Activated CD4-positive, alpha-beta T cell treated with anti-CD3 and anti-CD28 coated beads for 36 hours (primary cell): ENCODE measurements at regions of chr17 and their contacts with region 1.

Region 1: GRCh38 chr17:31696184-31696602 is 162.9 kb downstream of the COPRS start:
- DNase-seq: no peak
- ATAC-seq: no peak
- H3K4me3 Mint-ChIP-seq: no peak overlapping the region
- H3K27ac Mint-ChIP-seq: no peak overlapping the region
- H3K4me1 Mint-ChIP-seq: no peaks in the 10 kb centered on the region
- H3K27me3 Mint-ChIP-seq: peaks cover 2% of the 10 kb centered on the region

Region 2: GRCh38 chr17:31754239-31754945 is 58.2 kb after region 1 on chr17:
- CTCF ChIA-PET with region 1: no interaction called
- POLR2A ChIA-PET with region 1: no interaction called
- intact Hi-C with region 1: loop called in 1 of 2 experiments (anchors 10 kb)
- DNase-seq: no peak
- ATAC-seq: no peak
- H3K4me3 Mint-ChIP-seq: no peak overlapping the region
- H3K27ac Mint-ChIP-seq: no peak overlapping the region
- H3K4me1 Mint-ChIP-seq: no peaks in the 10 kb centered on the region
- H3K27me3 Mint-ChIP-seq: peaks cover 1% of the 10 kb centered on the region